Left colon (tissue), 2 donors: ENCODE measurements at regions of chr17 and their contacts with region 1.

Region 1: GRCh38 chr17:10618202-10618635 is 38.9 kb downstream of the MYH3 start:
- DNase-seq: peak; percentile 36 to 66
- ATAC-seq: peak; percentile 92

Region 2: DNA sequence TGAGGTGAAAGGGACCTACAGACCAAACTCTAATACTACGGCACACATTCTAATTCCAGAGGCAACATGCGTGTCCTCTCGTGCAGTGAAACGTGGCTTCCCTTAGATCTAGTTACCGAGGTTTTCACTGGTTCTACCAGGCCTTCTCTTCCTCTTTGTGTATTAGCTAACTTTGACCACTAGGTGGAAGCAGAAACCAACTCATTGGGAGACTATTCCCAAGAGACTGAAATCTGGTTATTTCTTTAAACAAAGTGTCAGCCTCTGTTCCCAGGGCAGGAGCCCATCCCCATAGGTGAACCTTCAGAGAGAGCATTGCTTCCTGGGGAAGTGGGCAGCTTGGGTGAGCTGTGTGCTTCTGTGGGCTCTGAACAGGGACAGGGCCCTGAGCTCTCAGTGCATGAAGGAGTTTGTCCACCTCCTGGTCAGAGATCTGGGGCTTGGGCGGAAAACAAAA is 693.5 kb before region 1 on chr17:
- intact Hi-C with region 1: loop called in 1 of 2 experiments (anchors 10 kb)
- DNase-seq: no peak
- ATAC-seq: peak; percentile 78

Region 3: GRCh38 chr17:10327640-10328039 is 290.6 kb before region 1 on chr17:
- intact Hi-C with region 1: loop called (anchors 10 kb)
- DNase-seq: peak; percentile 53 to 90
- ATAC-seq: peak; percentile 83